PC-9 (cell line): ENCODE measurements at regions of chr16 and their contacts with region 1.

Region 1: GRCh38 chr16:24844101-24845030 is 1.4 kb upstream of the SLC5A11 start:
- DNase-seq: peak; percentile 86 to 92
- H3K4me3 ChIP-seq: no peak overlapping the region
- H3K27ac ChIP-seq: peak overlapping the region; percentile 80
- H3K4me1 ChIP-seq: peaks cover 34% of the 10 kb centered on the region
- H3K27me3 ChIP-seq: no peaks in the 10 kb centered on the region
- CTCF ChIP-seq: no peak

Region 2: GRCh38 chr16:24876231-24876630 is 31.9 kb after region 1 on chr16:
- CTCF ChIA-PET with region 1: interaction called, 10 read pairs
- POLR2A ChIA-PET with region 1: no interaction called
- intact Hi-C with region 1: no loop called
- DNase-seq: no peak
- H3K4me3 ChIP-seq: no peak overlapping the region
- H3K27ac ChIP-seq: no peak overlapping the region
- H3K4me1 ChIP-seq: no peaks in the 10 kb centered on the region
- H3K27me3 ChIP-seq: no peaks in the 10 kb centered on the region
- CTCF ChIP-seq: no peak

Region 3: GRCh38 chr16:25111403-25112166 is 267.2 kb after region 1 on chr16 and contains the start of gene LCMT1:
- CTCF ChIA-PET with region 1: no interaction called
- POLR2A ChIA-PET with region 1: no interaction called
- intact Hi-C with region 1: loop called (anchors 1 kb)
- DNase-seq: peak; percentile 92 to 96
- H3K4me3 ChIP-seq: peak within 1 kb of the TSS; percentile 74
- H3K27ac ChIP-seq: peak within 1 kb of the TSS; percentile 82
- H3K4me1 ChIP-seq: peaks cover 29% of the 10 kb centered on the region
- H3K27me3 ChIP-seq: no peaks in the 10 kb centered on the region
- CTCF ChIP-seq: no peak
- total RNA-seq, gene LCMT1: 67.1 and 113 TPM in 2 replicates